Right ventricle myocardium inferior (tissue), 1 donor: ENCODE measurements at regions of chr17 and their contacts with region 1.

Region 1: GRCh38 chr17:4607773-4608187 is 23.5 kb downstream of the SMTNL2 start:
- DNase-seq: peak; percentile 85
- ATAC-seq: peak; percentile 57

Region 2: DNA sequence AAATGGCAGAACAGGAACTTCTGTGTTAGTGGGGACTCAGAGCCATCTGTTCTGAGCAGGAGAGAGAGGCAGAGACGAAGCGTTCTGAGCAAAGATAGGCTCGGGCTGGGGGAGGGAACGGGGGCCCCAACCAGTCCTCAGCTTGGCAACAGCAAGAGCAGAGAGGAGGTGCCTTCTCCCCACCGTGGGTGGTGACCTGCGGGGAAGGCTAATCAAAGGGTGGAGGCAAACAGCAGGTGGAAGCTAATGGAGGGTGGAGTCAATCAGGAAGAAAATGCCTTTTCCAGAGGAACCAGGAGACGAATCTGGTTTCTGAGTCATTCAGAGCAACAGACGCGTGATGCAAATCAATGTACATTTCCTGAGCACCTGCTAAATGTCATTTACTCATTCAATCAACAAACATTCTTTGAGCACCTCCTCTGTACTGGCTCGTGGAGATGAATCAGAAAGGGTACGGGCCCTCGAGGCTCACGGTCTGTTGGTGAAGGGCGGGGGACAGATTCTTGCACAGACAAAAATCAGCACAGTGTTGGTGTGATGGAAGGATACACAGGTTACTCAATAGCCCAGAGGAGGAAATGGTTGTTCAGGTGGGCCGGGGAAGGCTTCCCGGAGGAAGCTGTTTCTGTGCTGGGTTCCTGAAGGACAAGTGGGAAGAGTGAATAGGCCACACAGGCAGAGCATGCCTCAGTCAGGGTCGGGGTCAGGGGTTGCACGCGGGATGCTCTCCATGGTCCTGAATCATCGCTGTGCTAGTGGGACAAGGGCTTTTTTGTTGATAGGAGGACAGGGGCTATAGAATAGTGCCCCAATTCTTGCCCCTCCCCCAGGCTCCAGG is 114.8 kb before region 1 on chr17:
- intact Hi-C with region 1: no loop called
- DNase-seq: no peak
- ATAC-seq: no peak

Region 3: DNA sequence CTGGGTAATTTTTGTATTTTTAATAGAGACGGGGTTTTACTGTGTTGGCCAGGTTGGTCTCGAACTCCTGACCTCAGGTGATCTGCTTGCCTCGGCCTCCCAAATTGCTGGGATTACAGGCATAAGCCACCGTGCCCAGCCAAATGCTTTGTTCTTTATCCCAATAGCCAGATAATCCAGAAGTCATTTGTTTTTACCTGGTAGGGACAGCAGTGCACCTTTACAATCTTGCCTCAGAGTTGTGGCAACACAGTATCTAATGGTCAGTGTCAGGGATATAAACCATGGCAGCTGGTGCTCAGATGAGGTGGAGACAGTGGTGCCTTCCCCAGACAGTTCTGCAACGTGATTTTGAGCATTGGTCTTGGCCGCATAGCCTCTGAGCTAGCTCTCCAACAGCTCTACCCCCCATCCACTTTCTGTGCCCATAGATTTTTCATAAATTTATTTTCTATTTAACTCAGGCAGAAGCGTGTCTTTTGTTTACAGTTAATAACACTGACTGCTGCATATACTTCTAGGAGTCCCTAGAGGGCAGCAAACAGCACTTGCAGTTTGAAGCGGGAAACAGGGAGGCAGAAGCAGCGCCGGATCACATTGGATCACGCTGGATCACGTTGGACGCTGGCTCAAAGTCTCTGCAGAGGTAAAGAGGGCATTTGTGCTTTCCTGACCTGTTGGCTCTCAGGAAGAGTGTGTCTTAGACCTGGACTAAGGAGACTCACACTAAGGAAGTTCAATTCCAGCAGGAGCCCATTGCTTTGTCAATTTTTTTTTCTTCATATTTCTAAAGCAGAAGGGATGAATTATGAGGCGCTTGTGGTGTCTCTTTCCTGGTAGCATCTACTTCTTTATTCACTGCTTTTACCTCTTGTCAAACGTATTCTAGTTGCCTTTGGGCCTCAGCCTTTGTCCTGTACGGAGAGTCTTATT is 42.3 kb before region 1 on chr17:
- intact Hi-C with region 1: loop called (anchors 5 kb)
- DNase-seq: no peak
- ATAC-seq: peak; percentile 90

Region 4: GRCh38 chr17:4583782-4584100 is 24.0 kb before region 1 on chr17:
- intact Hi-C with region 1: loop called (anchors 2 kb)
- DNase-seq: no peak
- ATAC-seq: peak; percentile 66

Region 5: GRCh38 chr17:4635823-4636375 is 28.1 kb after region 1 on chr17:
- intact Hi-C with region 1: no loop called
- DNase-seq: no peak
- ATAC-seq: peak; percentile 43